ENCODE measurements at regions of chr6 and their contacts with region 1.

Region 1: DNA sequence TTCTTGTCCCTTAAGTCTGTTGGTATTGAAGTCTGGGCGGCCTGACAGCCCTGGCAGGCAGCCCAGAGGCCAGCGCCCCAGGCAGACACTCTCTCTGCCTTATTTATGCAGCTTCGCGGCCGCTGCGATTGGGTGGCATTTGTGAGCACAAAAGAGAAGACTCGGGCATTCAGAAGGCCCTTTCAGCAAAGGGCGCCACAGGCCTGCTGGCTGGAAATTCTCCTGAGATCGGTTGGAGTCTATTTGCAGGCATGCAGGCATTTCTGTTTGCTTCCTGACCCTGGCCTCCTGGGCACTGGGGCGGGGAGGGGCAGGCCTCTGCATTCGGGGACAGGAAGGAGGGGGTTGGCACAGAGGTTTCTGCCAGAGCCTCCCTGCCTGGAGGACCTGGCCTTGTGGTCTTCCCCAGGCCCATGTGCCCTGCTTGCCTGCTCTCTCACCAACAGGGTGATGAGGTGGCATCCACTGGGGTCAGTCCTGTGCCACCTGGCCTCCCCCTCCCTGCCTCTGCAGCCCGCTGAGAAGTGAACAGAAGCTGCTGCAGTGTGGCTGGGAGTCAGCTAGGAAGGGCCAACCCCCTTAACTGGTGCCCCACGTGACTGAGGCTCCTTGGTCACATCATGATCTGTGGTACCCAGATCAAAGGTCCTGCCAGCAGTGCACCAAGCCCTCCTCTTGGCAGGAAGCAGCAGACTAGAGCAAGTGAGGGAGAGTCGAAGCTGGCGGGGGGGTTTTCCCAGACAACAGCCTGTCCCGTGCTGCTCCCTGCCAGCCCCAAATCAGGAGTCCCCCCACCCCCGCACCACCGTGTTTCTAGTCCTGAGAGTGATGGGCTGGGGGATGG is 16.6 kb upstream of the CCDC167 start:
- DNase-seq: peak; percentile 76 to 99 (median 90)
- ATAC-seq: peak; percentile 80
- H3K4me3 ChIP-seq: peak overlapping the region; percentile 35 to 52
- H3K4me3 Mint-ChIP-seq: peak overlapping the region; percentile 88
- H3K27ac ChIP-seq: peak overlapping the region; percentile 80 to 94
- H3K27ac Mint-ChIP-seq: peak overlapping the region; percentile 99
- H3K4me1 ChIP-seq: peaks cover 85% of the 10 kb centered on the region
- H3K4me1 Mint-ChIP-seq: peaks cover 80% of the 10 kb centered on the region
- H3K27me3 ChIP-seq: no peaks in the 10 kb centered on the region
- H3K27me3 Mint-ChIP-seq: no peaks in the 10 kb centered on the region
- CTCF ChIP-seq: no peak

Region 2: DNA sequence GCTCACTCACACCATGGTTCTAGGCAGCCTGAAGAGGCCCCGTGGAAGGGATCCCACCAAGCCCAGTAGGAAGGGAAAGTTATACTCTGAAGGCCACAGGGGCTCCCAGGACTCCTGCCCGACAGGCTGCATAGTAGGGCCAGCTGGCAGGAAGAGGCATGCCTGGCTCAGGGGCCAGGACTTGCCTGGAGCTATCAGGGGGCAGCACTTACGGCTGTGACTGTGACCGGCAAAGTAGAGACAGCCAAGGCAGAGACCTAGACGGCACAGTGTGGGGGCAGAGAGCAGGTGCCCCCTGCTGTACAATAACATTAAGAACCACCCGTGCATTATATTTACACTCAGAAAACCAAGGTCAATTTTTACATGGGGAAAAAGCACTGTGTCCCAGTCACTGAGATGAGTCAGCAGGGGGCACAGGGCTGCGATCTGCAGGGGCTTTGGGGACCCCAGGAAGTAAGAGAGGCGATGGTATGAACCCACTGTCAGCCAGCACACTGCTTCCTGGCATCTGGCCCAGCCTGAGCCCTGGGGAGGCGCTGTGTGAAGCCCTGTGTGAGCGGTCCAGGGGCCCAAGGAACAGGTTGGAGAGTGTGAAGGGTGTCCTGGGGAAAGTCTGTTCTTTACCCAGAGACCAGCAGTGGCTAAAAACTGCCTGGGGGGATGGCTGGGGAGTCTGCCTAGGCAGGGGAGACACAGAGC is 26.5 kb before region 1 on chr6:
- CTCF ChIA-PET with region 1: interaction called, 9 read pairs
- POLR2A ChIA-PET with region 1: interaction called, 29 read pairs
- intact Hi-C with region 1: loop called in 1 of 2 experiments (anchors 5 kb)
- DNase-seq: peak in 7 of 9 experiments; percentile 41 to 75 (median 58)
- ATAC-seq: peak; percentile 78
- H3K4me3 ChIP-seq: no peak overlapping the region
- H3K4me3 Mint-ChIP-seq: peak overlapping the region; percentile 32
- H3K27ac ChIP-seq: peak overlapping the region in 1 of 2 experiments; percentile 72
- H3K27ac Mint-ChIP-seq: peak overlapping the region; percentile 91
- H3K4me1 ChIP-seq: peaks cover 37% of the 10 kb centered on the region
- H3K4me1 Mint-ChIP-seq: peaks cover 44% of the 10 kb centered on the region
- H3K27me3 ChIP-seq: no peaks in the 10 kb centered on the region
- H3K27me3 Mint-ChIP-seq: no peaks in the 10 kb centered on the region
- CTCF ChIP-seq: peak; percentile 55

Region 3: GRCh38 chr6:37538107-37538506 is 21.8 kb after region 1 on chr6:
- CTCF ChIA-PET with region 1: interaction called, 3 read pairs
- POLR2A ChIA-PET with region 1: interaction called, 18 read pairs
- intact Hi-C with region 1: no loop called
- DNase-seq: peak in 1 of 9 experiments; percentile 28
- ATAC-seq: no peak
- H3K4me3 ChIP-seq: no peak overlapping the region
- H3K4me3 Mint-ChIP-seq: no peak overlapping the region
- H3K27ac ChIP-seq: no peak overlapping the region
- H3K27ac Mint-ChIP-seq: peak overlapping the region; percentile 84
- H3K4me1 ChIP-seq: peaks cover 7% of the 10 kb centered on the region
- H3K4me1 Mint-ChIP-seq: peaks cover 22% of the 10 kb centered on the region
- H3K27me3 ChIP-seq: no peaks in the 10 kb centered on the region
- H3K27me3 Mint-ChIP-seq: no peaks in the 10 kb centered on the region
- CTCF ChIP-seq: no peak

Region 4: GRCh38 chr6:37547564-37548061 is 31.3 kb after region 1 on chr6:
- CTCF ChIA-PET with region 1: interaction called, 5 read pairs
- POLR2A ChIA-PET with region 1: interaction called, 35 read pairs
- intact Hi-C with region 1: no loop called
- DNase-seq: peak in 4 of 9 experiments; percentile 17 to 68 (median 55)
- ATAC-seq: peak; percentile 46
- H3K4me3 ChIP-seq: no peak overlapping the region
- H3K4me3 Mint-ChIP-seq: peak overlapping the region; percentile 51
- H3K27ac ChIP-seq: peak overlapping the region in 1 of 2 experiments; percentile 72
- H3K27ac Mint-ChIP-seq: peak overlapping the region; percentile 80
- H3K4me1 ChIP-seq: peaks cover 17% of the 10 kb centered on the region
- H3K4me1 Mint-ChIP-seq: peaks cover 45% of the 10 kb centered on the region
- H3K27me3 ChIP-seq: no peaks in the 10 kb centered on the region
- H3K27me3 Mint-ChIP-seq: no peaks in the 10 kb centered on the region
- CTCF ChIP-seq: no peak

Region 5: DNA sequence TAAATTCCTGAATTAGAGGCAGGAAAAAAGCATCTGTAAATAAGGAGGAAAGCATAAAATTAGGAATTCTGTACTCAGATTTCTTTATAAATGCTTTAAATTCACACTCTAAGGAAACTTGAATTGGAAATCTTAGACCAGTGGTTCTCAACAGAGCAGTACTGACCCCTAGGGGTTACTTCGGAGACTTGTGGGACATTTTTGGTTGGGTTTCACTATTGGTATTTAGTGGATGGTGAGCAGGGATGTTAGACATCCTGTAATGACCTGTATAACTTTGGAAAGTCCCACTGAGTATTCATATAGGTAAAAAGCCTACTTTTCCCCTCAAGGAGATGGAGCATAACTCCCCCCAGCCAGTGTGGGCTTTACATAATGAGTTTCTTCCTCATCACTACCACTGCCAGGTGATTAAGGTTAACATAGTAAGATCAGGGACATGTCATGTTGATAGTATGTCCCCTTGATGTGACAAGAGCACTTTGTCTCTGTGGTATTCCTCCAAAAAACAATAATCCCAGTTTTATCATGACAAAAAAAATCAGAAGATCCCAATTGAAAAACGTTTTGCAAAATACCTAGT is 1155.7 kb after region 1 on chr6:
- CTCF ChIA-PET with region 1: no interaction called
- POLR2A ChIA-PET with region 1: no interaction called
- intact Hi-C with region 1: no loop called
- DNase-seq: peak in 4 of 9 experiments; percentile 24 to 70 (median 43)
- ATAC-seq: peak; percentile 74
- H3K4me3 ChIP-seq: no peak overlapping the region
- H3K4me3 Mint-ChIP-seq: no peak overlapping the region
- H3K27ac ChIP-seq: no peak overlapping the region
- H3K27ac Mint-ChIP-seq: no peak overlapping the region
- H3K4me1 ChIP-seq: peaks cover 6% of the 10 kb centered on the region
- H3K4me1 Mint-ChIP-seq: peaks cover 6% of the 10 kb centered on the region
- H3K27me3 ChIP-seq: no peaks in the 10 kb centered on the region
- H3K27me3 Mint-ChIP-seq: no peaks in the 10 kb centered on the region
- CTCF ChIP-seq: peak; percentile 75

Region 6: GRCh38 chr6:38702558-38703397 is 1186.5 kb after region 1 on chr6 and contains the start of gene GLO1:
- CTCF ChIA-PET with region 1: no interaction called
- POLR2A ChIA-PET with region 1: no interaction called
- intact Hi-C with region 1: loop called in 1 of 2 experiments (anchors 5 kb)
- DNase-seq: peak; percentile 91 to 98 (median 96)
- ATAC-seq: peak; percentile 99
- H3K4me3 ChIP-seq: peak within 1 kb of the TSS; percentile 64 to 88
- H3K4me3 Mint-ChIP-seq: peak within 1 kb of the TSS; percentile 83
- H3K27ac ChIP-seq: peak within 1 kb of the TSS; percentile 78 to 90
- H3K27ac Mint-ChIP-seq: peak within 1 kb of the TSS; percentile 92
- H3K4me1 ChIP-seq: no peaks in the 10 kb centered on the region
- H3K4me1 Mint-ChIP-seq: peaks cover 24% of the 10 kb centered on the region
- H3K27me3 ChIP-seq: no peaks in the 10 kb centered on the region
- H3K27me3 Mint-ChIP-seq: peaks cover 6% of the 10 kb centered on the region
- CTCF ChIP-seq: no peak
- total RNA-seq, gene GLO1: 23.1 to 23.9 TPM